ENCODE measurements at regions of chr12 and their contacts with region 1.

Region 1: DNA sequence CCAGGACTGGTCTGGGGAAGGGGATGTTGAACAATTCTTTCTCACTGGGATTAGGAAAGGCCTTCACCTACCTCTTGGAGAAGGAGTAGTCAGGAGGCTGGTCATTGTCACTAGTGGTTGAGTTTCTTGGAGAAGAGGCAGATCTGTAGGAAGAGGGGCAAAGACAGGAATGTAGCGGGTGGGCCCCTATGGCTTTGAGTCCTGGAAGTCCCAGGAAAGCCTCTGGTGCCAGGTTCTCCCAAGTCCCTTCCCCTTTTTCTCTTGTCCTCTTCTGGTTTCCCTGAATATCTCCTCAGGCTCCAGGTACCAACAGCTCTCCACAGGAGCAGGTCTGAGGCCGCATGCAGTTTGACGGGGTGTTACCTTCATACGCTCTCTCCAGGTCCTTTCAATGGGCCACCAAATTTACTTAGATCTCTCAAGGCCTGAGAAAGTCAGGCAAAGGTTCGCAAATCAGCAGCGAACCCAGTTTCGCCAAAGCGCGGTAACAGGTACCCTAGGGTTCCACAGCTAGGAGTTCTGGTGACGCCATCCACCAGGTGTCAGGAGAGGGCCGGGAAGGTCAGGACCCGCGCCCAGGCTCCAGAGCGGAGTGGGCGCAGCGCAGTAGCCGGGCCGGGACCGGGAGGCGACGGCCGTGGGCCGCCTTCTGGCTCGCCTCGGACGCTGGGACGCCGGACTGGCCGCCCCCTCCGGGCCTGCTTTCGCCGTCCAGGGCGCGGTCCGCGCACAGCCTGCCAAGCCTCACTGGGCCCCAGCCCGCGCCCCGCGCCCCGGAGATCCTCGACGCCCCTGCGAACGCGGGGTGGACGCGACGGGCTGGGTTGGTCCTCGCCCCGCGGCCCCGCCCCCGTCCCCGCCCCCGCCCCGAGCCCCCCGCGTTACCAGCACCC is 795 bp downstream of the SMAGP start:
- DNase-seq: peak; percentile 81
- ATAC-seq: peak; percentile 91
- H3K4me3 ChIP-seq: peak overlapping the region; percentile 74
- H3K27ac ChIP-seq: peak overlapping the region; percentile 80
- H3K4me1 ChIP-seq: peaks cover 15% of the 10 kb centered on the region
- H3K27me3 ChIP-seq: no peaks in the 10 kb centered on the region
- CTCF ChIP-seq: peak; percentile 49

Region 2: DNA sequence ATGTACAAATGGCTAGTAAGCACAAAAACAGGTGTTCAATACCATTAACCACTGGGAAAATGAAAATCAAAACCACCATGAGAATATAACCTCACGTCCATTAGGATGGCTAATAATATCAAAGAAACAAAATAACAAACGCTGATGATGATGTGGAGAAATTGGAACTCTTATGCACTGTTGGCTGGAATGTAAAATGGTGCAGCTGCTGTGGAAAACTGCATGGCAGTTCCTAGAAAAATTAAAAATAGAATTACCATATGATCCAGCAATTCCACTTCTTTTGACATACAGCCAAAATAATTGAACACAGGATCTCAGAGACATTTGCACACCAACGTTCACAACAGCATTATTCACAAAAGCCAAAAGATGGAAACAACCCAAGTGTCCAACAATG is 375.2 kb before region 1 on chr12:
- intact Hi-C with region 1: no loop called
- DNase-seq: no peak
- ATAC-seq: no peak
- H3K4me3 ChIP-seq: no peak overlapping the region
- H3K27ac ChIP-seq: no peak overlapping the region
- H3K4me1 ChIP-seq: no peaks in the 10 kb centered on the region
- H3K27me3 ChIP-seq: no peaks in the 10 kb centered on the region
- CTCF ChIP-seq: no peak

Region 3: GRCh38 chr12:51341259-51342007 is 72.0 kb after region 1 on chr12:
- intact Hi-C with region 1: loop called (anchors 2 kb)
- DNase-seq: peak; percentile 53
- ATAC-seq: peak; percentile 90 to 92
- H3K4me3 ChIP-seq: peak overlapping the region; percentile 30
- H3K27ac ChIP-seq: peak overlapping the region; percentile 9
- H3K4me1 ChIP-seq: peaks cover 3% of the 10 kb centered on the region
- H3K27me3 ChIP-seq: no peaks in the 10 kb centered on the region
- CTCF ChIP-seq: peak; percentile 97